Left ventricle myocardium inferior (tissue), 1 donor: ENCODE measurements at regions of chr1 and their contacts with region 1.

Region 1: GRCh38 chr1:64469977-64470664 is at the start of gene CACHD1:
- DNase-seq: peak; percentile 74
- H3K4me3 ChIP-seq: peak within 1 kb of the TSS; percentile 81
- H3K27ac ChIP-seq: peak within 1 kb of the TSS; percentile 87
- H3K4me1 ChIP-seq: peaks cover 47% of the 10 kb centered on the region
- H3K27me3 ChIP-seq: peaks cover 8% of the 10 kb centered on the region
- CTCF ChIP-seq: peak; percentile 65
- total RNA-seq, gene CACHD1: 2.7 TPM

Region 2: DNA sequence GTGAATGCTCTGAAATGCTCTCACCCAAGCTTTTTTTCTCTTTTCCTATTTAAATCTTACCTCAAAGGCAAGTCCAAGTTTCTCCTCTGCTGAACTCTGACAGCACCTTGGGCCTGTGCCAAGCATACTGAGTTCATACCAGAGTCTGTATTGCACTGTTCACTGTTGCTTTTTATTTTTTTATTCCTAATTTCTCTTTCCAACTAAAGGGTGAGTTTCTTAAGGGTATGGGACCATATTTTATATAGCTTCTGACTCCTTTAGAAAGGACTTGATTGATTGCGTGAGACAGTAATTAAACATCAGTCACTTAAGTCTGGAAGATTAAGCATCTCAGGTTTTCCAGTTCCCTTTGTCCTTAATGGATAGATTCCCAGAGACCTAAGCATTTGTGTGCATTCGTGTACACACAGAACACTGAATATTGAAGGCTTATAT is 69.7 kb after region 1 on chr1:
- intact Hi-C with region 1: loop called (anchors 10 kb)
- DNase-seq: peak; percentile 69
- H3K4me3 ChIP-seq: peak overlapping the region; percentile 45
- H3K27ac ChIP-seq: peak overlapping the region; percentile 70
- H3K4me1 ChIP-seq: peaks cover 46% of the 10 kb centered on the region
- H3K27me3 ChIP-seq: no peaks in the 10 kb centered on the region
- CTCF ChIP-seq: no peak

Region 3: GRCh38 chr1:64654519-64655341 is 184.6 kb after region 1 on chr1:
- intact Hi-C with region 1: loop called (anchors 10 kb)
- DNase-seq: no peak
- H3K4me3 ChIP-seq: no peak overlapping the region
- H3K27ac ChIP-seq: no peak overlapping the region
- H3K4me1 ChIP-seq: peaks cover 3% of the 10 kb centered on the region
- H3K27me3 ChIP-seq: no peaks in the 10 kb centered on the region
- CTCF ChIP-seq: peak; percentile 35